ENCODE measurements at regions of chr22 and their contacts with region 1.

Region 1: DNA sequence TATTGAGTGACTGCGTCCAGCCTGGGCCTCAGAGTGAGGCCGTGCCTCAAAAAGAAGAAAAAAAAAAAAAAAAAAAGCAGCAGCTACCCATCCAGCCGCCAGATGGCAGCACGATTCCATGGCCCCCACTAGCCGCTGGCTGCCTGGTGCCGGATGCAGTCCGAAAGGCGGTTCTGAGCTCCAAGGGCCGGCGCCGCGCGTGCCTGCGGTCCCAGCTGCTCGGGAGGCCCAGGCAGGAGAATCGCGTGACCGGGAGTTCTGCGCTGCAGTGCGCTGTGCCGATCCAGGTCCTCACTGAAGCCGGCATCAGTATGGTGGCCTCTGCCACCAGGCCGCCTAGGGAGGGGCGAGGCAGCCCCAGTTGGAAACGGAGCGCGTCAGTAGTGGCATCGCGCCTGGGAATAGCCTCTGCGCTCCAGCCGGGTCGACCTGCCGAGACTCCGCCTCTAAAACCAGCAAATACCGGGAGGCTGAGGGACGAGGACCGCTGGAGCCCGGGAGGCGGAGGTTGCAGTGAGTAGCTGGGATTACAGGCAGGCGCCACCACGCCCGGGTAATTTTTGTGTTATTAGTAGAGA is 19.3 kb downstream of the SCARF2 start:
- DNase-seq: peak; percentile 86 to 92
- ATAC-seq: peak; percentile 82 to 93 (median 85)
- H3K4me3 ChIP-seq: peak overlapping the region; percentile 52
- H3K27ac ChIP-seq: no peak overlapping the region
- H3K4me1 ChIP-seq: peaks cover 3% of the 10 kb centered on the region
- H3K27me3 ChIP-seq: no peaks in the 10 kb centered on the region
- CTCF ChIP-seq: peak; percentile 87

Region 2: GRCh38 chr22:20456064-20456721 is 37.9 kb after region 1 on chr22:
- intact Hi-C with region 1: loop called (anchors 1 to 2 kb)
- DNase-seq: peak; percentile 75 to 85
- ATAC-seq: peak; percentile 67 to 92 (median 88)
- H3K4me3 ChIP-seq: no peak overlapping the region
- H3K27ac ChIP-seq: no peak overlapping the region
- H3K4me1 ChIP-seq: no peaks in the 10 kb centered on the region
- H3K27me3 ChIP-seq: no peaks in the 10 kb centered on the region
- CTCF ChIP-seq: peak; percentile 82

Region 3: GRCh38 chr22:20495861-20496681 is 77.8 kb after region 1 on chr22:
- intact Hi-C with region 1: loop called in 1 of 2 experiments (anchors 2 kb)
- DNase-seq: peak; percentile 92 to 95
- ATAC-seq: peak; percentile 93 to 96 (median 94)
- H3K4me3 ChIP-seq: peak overlapping the region; percentile 90
- H3K27ac ChIP-seq: peak overlapping the region; percentile 97
- H3K4me1 ChIP-seq: peaks cover 16% of the 10 kb centered on the region
- H3K27me3 ChIP-seq: no peaks in the 10 kb centered on the region
- CTCF ChIP-seq: peak; percentile 85

Region 4: DNA sequence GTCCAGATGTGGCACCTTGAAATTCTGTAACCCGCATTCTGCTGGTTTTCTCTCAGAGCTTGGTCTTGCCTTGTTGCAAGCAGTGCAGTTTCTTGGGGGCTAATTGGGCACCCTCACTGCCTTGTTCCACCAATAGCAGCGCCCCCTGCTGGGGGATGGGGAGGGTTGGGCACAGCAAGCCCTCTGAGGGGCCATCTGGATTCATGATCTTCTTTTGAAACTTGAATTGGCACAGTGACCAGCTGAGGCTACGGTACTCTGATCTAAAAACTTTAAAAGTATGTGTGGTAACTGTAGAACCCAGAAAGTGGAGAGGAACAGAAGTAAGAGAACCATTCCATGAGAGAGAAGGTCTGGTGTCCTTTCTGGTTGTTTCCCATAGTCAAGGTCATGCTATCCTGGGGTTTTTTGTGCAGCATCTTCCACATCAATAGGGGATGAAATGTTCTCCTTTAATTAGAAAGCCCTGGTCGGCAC is 153.3 kb after region 1 on chr22:
- intact Hi-C with region 1: loop called in 1 of 2 experiments (anchors 10 kb)
- DNase-seq: peak; percentile 64 to 74
- ATAC-seq: peak in 1 of 4 donors; percentile 25
- H3K4me3 ChIP-seq: no peak overlapping the region
- H3K27ac ChIP-seq: no peak overlapping the region
- H3K4me1 ChIP-seq: peaks cover 16% of the 10 kb centered on the region
- H3K27me3 ChIP-seq: no peaks in the 10 kb centered on the region
- CTCF ChIP-seq: peak; percentile 56

Region 5: DNA sequence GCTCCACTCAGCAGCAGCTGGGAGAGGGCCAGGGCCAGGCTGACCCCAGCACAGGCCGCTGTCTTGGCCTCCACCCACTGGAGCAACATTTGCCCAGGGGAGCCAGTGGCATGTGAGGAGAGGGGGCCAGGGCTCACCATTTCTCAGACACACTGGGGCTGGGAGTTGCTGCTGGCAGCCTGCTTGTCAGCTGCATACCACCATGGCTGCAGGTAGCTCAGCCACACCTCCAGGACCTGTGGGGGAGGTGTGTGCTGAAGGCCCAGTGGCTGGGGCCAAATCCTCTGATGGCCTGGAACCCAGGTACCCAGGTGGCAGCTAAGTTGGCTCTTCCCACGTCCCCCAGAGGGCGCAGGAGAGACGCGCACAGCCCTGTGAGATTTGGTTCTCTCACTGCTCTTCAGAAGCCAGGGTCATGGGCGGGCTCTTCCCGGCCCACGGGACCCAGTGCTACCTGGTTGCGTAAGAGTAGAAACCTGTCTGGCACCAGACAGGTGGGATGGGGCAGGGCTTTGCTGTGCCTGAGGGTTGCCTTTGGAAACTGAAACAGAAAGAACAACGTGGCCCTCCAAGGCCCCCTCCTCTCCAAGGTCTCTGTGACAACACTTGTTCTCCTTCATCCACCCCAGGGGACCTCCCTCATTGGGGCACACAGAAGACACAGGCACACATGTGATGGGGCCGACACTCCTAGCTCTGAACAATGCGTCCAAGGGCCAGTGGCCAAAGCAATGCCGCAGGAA is 187.9 kb after region 1 on chr22:
- intact Hi-C with region 1: no loop called
- DNase-seq: no peak
- ATAC-seq: peak in 3 of 4 donors; percentile 33 to 71 (median 66)
- H3K4me3 ChIP-seq: no peak overlapping the region
- H3K27ac ChIP-seq: no peak overlapping the region
- H3K4me1 ChIP-seq: no peaks in the 10 kb centered on the region
- H3K27me3 ChIP-seq: no peaks in the 10 kb centered on the region
- CTCF ChIP-seq: peak; percentile 47

Measured in psoas muscle (tissue), 8 donors.